Activated CD4-positive, alpha-beta T cell treated with anti-CD3 and anti-CD28 coated beads, Interleukin-2, amount 10 ng/mL, durations not matched to agents 24 days and 14 days (primary cell): ENCODE measurements at regions of chr4 and their contacts with region 1.

Region 1: GRCh38 chr4:25843340-25844097 is 19.3 kb downstream of the SEL1L3 start:
- DNase-seq: peak; percentile 72
- H3K4me3 Mint-ChIP-seq: peak overlapping the region; percentile 70
- H3K27ac Mint-ChIP-seq: peak overlapping the region; percentile 64
- H3K4me1 Mint-ChIP-seq: peaks cover 48% of the 10 kb centered on the region
- H3K27me3 Mint-ChIP-seq: no peaks in the 10 kb centered on the region

Region 2: DNA sequence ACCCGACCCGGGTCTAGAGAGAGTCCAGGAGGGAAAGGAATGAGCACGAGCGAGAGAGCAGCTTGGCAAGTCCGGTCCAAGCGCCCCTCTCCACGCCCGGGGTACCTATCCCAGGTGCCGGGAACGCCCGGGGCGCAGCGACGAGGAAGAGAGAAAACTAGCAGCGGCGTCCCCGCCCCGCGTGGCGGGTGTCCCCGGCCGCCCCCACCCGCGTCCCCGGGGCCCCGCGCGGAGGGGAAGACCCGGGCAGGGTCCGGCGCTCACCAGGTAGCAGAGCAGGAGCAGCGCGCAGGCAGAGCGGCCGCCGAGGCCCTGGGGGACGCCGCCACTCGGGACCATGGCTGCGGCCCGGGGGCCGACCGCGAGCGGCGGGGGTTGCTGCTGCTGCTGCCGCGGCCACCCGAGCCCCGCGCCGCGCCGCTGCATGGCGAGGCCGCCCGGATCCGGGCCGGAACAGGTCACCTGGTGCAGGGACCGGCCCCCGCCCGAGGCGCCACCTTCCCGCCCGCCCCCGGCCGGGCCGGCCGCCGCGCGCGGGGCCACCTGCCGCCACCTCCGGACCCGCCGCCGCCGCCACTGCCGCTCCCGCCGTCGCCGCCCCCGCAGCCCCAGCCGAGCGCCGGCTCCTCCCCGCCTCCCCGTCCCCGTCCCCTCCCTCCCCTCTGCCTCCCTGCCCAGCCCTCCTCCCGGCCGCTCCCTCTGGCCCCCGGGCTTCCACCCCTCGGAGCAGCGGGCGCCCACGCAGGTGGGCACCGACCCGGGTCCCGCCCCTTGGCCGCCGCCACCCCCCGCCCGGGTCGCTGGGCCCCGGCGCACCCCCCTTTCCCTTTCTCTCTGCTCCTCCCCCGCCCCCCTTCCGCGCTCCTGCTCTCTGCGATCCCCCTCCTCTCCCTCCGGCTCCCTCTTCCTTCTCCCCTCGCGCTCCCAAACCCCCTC is 19.2 kb after region 1 on chr4 and contains the start of gene SEL1L3:
- intact Hi-C with region 1: loop called (anchors 2 kb)
- DNase-seq: peak; percentile 86
- H3K4me3 Mint-ChIP-seq: peak within 1 kb of the TSS; percentile 99
- H3K27ac Mint-ChIP-seq: peak within 1 kb of the TSS; percentile 100
- H3K4me1 Mint-ChIP-seq: peaks cover 30% of the 10 kb centered on the region
- H3K27me3 Mint-ChIP-seq: peaks cover 2% of the 10 kb centered on the region
- total RNA-seq, gene SEL1L3: 33.9 and 35.3 TPM in 2 replicates